ENCODE measurements at regions of chr20 and their contacts with region 1.

Region 1: DNA sequence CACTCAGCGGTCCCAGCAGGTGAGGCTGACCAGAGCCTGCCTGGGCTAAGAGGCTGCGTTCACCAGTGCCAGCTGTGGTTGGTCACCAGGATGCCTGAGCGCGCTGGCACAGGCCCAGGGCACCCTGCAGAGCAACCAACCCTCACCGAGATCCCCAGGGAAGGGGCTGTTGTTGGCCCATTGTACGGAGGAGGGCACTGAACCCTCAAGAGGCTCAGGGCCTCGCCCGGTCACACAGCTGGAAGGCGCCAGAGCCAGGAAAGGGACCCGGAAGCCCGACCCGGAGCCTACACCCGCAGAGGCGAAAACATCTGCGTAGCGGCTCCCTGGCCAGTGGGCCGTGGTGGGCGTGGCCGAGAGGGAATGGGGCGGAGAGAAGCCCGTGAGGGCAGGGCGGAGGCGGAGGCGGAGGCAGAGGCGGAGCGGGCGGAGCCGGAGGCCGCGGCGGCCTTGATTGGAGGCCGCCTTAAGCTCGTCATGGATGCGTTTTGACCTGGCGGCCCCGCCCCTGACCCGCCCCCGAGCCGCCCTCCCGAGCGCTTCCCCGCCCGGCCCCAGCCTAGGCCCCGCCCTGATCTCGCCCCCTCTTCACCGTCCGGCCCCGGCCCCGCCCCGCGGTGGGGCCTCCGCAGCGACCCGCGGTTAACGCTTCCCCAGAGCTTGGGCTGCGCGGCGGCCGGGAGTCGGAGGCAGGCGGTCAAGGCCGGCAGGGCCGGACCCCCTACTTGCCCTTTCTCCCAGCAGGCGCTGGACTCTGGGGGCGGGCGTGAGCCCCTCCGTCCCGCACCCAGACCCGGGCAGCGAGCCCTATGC is 2.2 kb upstream of the MRGBP start:
- DNase-seq: peak; percentile 98
- ATAC-seq: peak; percentile 75
- H3K4me3 Mint-ChIP-seq: peak overlapping the region; percentile 80
- H3K27ac Mint-ChIP-seq: peak overlapping the region; percentile 88
- H3K4me1 Mint-ChIP-seq: peaks cover 31% of the 10 kb centered on the region
- H3K27me3 Mint-ChIP-seq: no peaks in the 10 kb centered on the region

Region 2: GRCh38 chr20:62121776-62122631 is 672.1 kb before region 1 on chr20 and contains the start of gene LSM14B:
- CTCF ChIA-PET with region 1: no interaction called
- POLR2A ChIA-PET with region 1: no interaction called
- intact Hi-C with region 1: loop called in 1 of 2 experiments (anchors 1 kb)
- DNase-seq: peak; percentile 99
- ATAC-seq: peak; percentile 84
- H3K4me3 Mint-ChIP-seq: peak within 1 kb of the TSS; percentile 80
- H3K27ac Mint-ChIP-seq: peak within 1 kb of the TSS; percentile 91
- H3K4me1 Mint-ChIP-seq: peaks cover 54% of the 10 kb centered on the region
- H3K27me3 Mint-ChIP-seq: no peaks in the 10 kb centered on the region
- total RNA-seq, gene LSM14B: 38.7 TPM

Region 3: GRCh38 chr20:62386383-62387218 is 407.5 kb before region 1 on chr20 and contains the start of gene RPS21:
- CTCF ChIA-PET with region 1: no interaction called
- POLR2A ChIA-PET with region 1: no interaction called
- intact Hi-C with region 1: loop called (anchors 2 to 10 kb)
- DNase-seq: peak; percentile 97
- ATAC-seq: peak; percentile 91
- H3K4me3 Mint-ChIP-seq: peak within 1 kb of the TSS; percentile 93
- H3K27ac Mint-ChIP-seq: peak within 1 kb of the TSS; percentile 94
- H3K4me1 Mint-ChIP-seq: peaks cover 42% of the 10 kb centered on the region
- H3K27me3 Mint-ChIP-seq: no peaks in the 10 kb centered on the region
- total RNA-seq, gene RPS21: 1,051 to 2,439 TPM

Region 4: DNA sequence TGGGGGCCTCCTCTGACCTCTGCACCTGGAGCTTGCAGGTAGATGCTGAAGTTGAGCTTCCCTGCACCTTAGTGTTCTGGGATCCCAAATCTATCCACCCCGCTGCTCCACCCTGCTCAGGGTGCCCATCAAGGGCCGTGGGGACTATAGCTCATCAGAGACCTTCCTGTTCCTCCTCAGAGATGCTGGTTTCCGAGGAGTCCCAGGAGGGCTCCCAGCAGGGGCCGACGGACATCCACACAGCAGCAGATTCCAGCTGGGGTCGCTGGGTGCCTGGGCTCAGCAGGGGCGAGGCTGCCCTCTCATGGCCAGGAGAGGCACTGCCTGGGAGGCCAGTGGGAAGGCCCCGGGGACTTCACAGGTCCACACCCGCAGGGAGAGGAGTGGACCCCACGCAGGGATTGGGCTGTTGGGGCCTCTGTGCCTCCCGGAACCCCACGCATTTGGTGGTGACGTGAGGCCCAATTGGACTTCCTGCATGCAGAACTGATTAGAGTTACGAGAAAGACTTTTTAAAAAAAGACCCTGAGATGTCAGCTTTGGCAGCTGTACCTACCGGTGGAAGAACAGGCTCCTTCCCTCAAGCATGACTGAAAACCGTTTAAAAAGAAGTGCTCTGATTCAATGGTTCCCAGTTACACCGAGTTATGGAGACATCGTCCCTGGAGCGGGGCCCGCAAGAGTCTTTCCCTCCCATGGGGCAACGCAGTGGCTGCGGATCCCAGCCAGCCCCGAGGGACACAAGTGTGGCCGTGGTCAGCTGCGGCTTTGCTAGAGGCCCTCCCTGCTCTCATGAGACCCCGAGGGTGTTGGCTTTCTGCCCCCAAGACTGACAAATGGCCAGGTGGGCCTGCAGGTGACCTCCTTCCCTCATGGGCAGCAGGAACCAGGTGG is 177.1 kb before region 1 on chr20:
- CTCF ChIA-PET with region 1: interaction called, 8 read pairs
- POLR2A ChIA-PET with region 1: no interaction called
- intact Hi-C with region 1: loop called (anchors 1 to 5 kb)
- DNase-seq: peak; percentile 88
- ATAC-seq: peak; percentile 75
- H3K4me3 Mint-ChIP-seq: peak overlapping the region; percentile 57
- H3K27ac Mint-ChIP-seq: peak overlapping the region; percentile 91
- H3K4me1 Mint-ChIP-seq: peaks cover 29% of the 10 kb centered on the region
- H3K27me3 Mint-ChIP-seq: no peaks in the 10 kb centered on the region

Region 5: GRCh38 chr20:62668441-62669027 is 125.6 kb before region 1 on chr20:
- CTCF ChIA-PET with region 1: interaction called, 5 read pairs
- POLR2A ChIA-PET with region 1: no interaction called
- intact Hi-C with region 1: loop called (anchors 1 to 2 kb)
- DNase-seq: peak; percentile 45
- ATAC-seq: no peak
- H3K4me3 Mint-ChIP-seq: no peak overlapping the region
- H3K27ac Mint-ChIP-seq: no peak overlapping the region
- H3K4me1 Mint-ChIP-seq: no peaks in the 10 kb centered on the region
- H3K27me3 Mint-ChIP-seq: no peaks in the 10 kb centered on the region

Region 6: GRCh38 chr20:62808211-62808865 is 14.2 kb after region 1 on chr20:
- CTCF ChIA-PET with region 1: interaction called, 16 read pairs
- POLR2A ChIA-PET with region 1: no interaction called
- intact Hi-C with region 1: loop called (anchors 1 kb)
- DNase-seq: peak; percentile 86
- ATAC-seq: peak; percentile 67
- H3K4me3 Mint-ChIP-seq: no peak overlapping the region
- H3K27ac Mint-ChIP-seq: no peak overlapping the region
- H3K4me1 Mint-ChIP-seq: peaks cover 21% of the 10 kb centered on the region
- H3K27me3 Mint-ChIP-seq: no peaks in the 10 kb centered on the region

Region 7: GRCh38 chr20:63520504-63520933 is 726.4 kb after region 1 on chr20 and contains the start of gene PPDPF:
- CTCF ChIA-PET with region 1: no interaction called
- POLR2A ChIA-PET with region 1: no interaction called
- intact Hi-C with region 1: loop called in 1 of 2 experiments (anchors 2 kb)
- DNase-seq: peak; percentile 93
- ATAC-seq: peak; percentile 80
- H3K4me3 Mint-ChIP-seq: peak within 1 kb of the TSS; percentile 77
- H3K27ac Mint-ChIP-seq: peak within 1 kb of the TSS; percentile 78
- H3K4me1 Mint-ChIP-seq: peaks cover 10% of the 10 kb centered on the region
- H3K27me3 Mint-ChIP-seq: no peaks in the 10 kb centered on the region
- total RNA-seq, gene PPDPF: 119 to 133 TPM

Measured in activated CD4-positive, alpha-beta T cell treated with anti-CD3 and anti-CD28 coated beads for 36 hours (primary cell).